K562 (cell line): ENCODE measurements at regions of chr17 and their contacts with region 1.

Region 1: GRCh38 chr17:8118769-8119580 is 661 bp upstream of the ALOXE3 start:
- DNase-seq: peak; percentile 73 to 85 (median 76)
- ATAC-seq: peak; percentile 81
- H3K4me3 ChIP-seq: peak overlapping the region; percentile 65
- H3K27ac ChIP-seq: peak overlapping the region; percentile 63; the same call in 2 of the 3 replicates
- H3K4me1 ChIP-seq: peaks cover 20 to 43% of the 10 kb centered on the region in 2 experiments
- H3K27me3 ChIP-seq: peaks cover 14 to 41% of the 10 kb centered on the region in 2 experiments
- CTCF ChIP-seq: peak; percentile 77 to 89 (median 87)
- EP300 ChIP-seq: peak; percentile 32; the same call in 1 of the 2 replicates
- POLR2A ChIP-seq: no peak
- RAD21 ChIP-seq: peak; percentile 52 to 68

Region 2: GRCh38 chr17:7834962-7835813 is 283.8 kb before region 1 on chr17:
- CTCF ChIA-PET with region 1: no interaction called
- POLR2A ChIA-PET with region 1: no interaction called
- in situ Hi-C with region 1: no loop called
- intact Hi-C with region 1: loop called (anchors 10 kb)
- DNase-seq: peak; percentile 84 to 96 (median 90)
- ATAC-seq: peak; percentile 65
- H3K4me3 ChIP-seq: peak overlapping the region; percentile 65
- H3K27ac ChIP-seq: peak overlapping the region; percentile 85
- H3K4me1 ChIP-seq: peaks cover 34 to 50% of the 10 kb centered on the region in 2 experiments
- H3K27me3 ChIP-seq: peaks cover 8 to 14% of the 10 kb centered on the region in 2 experiments; a peak in 4 of 5 replicates
- CTCF ChIP-seq: peak; percentile 60 to 90 (median 65)
- EP300 ChIP-seq: 0 out of 2 replicates have a peak, but pooled peaks have one; percentile 16
- POLR2A ChIP-seq: 0 out of 2 replicates have a peak, but pooled peaks have one; percentile 1
- RAD21 ChIP-seq: peak; percentile 43 to 77

Region 3: GRCh38 chr17:7956228-7956965 is 162.6 kb before region 1 on chr17:
- CTCF ChIA-PET with region 1: no interaction called
- POLR2A ChIA-PET with region 1: no interaction called
- in situ Hi-C with region 1: no loop called
- intact Hi-C with region 1: no loop called
- DNase-seq: no peak
- ATAC-seq: no peak
- H3K4me3 ChIP-seq: no peak overlapping the region
- H3K27ac ChIP-seq: no peak overlapping the region
- H3K4me1 ChIP-seq: no peaks in the 10 kb centered on the region; a peak in 1 of 5 replicates
- H3K27me3 ChIP-seq: peaks cover 0 to 5% of the 10 kb centered on the region in 2 experiments; a peak in 1 of 5 replicates
- CTCF ChIP-seq: no peak
- EP300 ChIP-seq: no peak
- POLR2A ChIP-seq: no peak
- RAD21 ChIP-seq: no peak

Region 4: DNA sequence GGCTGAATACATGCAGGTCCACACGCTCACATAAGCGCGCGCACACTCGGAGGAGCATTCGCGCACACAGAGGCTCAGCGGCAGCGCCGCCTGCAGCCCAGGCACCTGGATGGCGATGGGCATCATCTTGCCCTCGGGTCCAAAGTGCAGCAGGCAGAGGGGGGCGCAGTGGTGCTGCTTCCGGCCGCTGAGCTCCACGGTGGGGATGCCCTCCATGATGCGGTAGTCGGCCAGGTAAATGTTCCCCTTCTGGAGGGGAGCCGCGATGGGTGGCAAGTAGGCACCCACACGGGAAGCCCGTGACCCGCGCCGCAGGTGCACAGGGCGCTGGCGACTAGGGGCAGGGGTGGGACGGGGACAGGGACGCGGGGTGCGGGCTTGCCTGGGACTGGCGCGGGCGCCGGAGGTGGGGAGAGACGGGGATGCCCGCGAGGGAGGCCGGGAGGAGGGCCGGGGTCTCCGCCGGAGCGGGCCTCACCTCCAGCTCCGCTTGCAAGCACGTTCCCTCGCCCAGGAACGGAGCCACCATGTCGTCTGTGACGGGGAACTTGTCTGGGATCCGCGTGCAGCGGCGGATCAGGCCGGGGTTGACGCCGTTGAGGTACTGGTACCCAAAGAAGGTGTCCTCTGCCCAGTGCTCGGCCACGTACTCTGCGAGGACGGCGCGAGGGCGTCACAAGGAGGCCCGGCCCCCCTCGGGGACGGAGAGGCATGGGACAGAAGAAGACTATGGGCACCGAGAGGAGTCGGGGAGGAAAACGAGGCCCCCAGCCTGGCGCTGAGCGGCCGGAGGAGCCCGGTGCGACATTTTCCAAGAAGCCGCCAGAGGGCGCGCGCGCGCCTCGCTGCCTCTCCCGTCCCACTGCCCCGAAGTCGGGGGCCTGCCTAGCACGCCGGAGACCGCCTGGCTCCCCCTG is 39.4 kb before region 1 on chr17:
- CTCF ChIA-PET with region 1: interaction called, 9 read pairs
- POLR2A ChIA-PET with region 1: no interaction called
- in situ Hi-C with region 1: loop called (anchors 5 kb)
- intact Hi-C with region 1: loop called (anchors 2 kb)
- DNase-seq: peak; percentile 74 to 77 (median 76)
- ATAC-seq: peak; percentile 96
- H3K4me3 ChIP-seq: peak overlapping the region; percentile 12; the same call in 1 of the 2 replicates
- H3K27ac ChIP-seq: no peak overlapping the region
- H3K4me1 ChIP-seq: peaks cover 10 to 22% of the 10 kb centered on the region in 2 experiments; a peak in 4 of 5 replicates
- H3K27me3 ChIP-seq: peaks cover 0 to 8% of the 10 kb centered on the region in 2 experiments; a peak in 3 of 5 replicates
- CTCF ChIP-seq: peak; percentile 70 to 86 (median 74)
- EP300 ChIP-seq: no peak
- POLR2A ChIP-seq: no peak
- RAD21 ChIP-seq: peak; percentile 51 to 83

Region 5: GRCh38 chr17:8089728-8090127 is 29.2 kb before region 1 on chr17:
- CTCF ChIA-PET with region 1: no interaction called
- POLR2A ChIA-PET with region 1: no interaction called
- in situ Hi-C with region 1: no loop called
- intact Hi-C with region 1: no loop called
- DNase-seq: no peak
- ATAC-seq: no peak
- H3K4me3 ChIP-seq: no peak overlapping the region
- H3K27ac ChIP-seq: no peak overlapping the region
- H3K4me1 ChIP-seq: peaks cover 0 to 6% of the 10 kb centered on the region in 2 experiments; a peak in 2 of 5 replicates
- H3K27me3 ChIP-seq: peaks cover 3 to 31% of the 10 kb centered on the region in 2 experiments; a peak in 2 of 5 replicates
- CTCF ChIP-seq: no peak
- EP300 ChIP-seq: no peak
- POLR2A ChIP-seq: no peak
- RAD21 ChIP-seq: no peak

Region 6: GRCh38 chr17:8138672-8139371 is 19.8 kb after region 1 on chr17:
- CTCF ChIA-PET with region 1: interaction called, 3 read pairs
- POLR2A ChIA-PET with region 1: interaction called, 4 read pairs
- in situ Hi-C with region 1: no loop called
- intact Hi-C with region 1: loop called (anchors 2 kb)
- DNase-seq: peak; percentile 73 to 94 (median 77)
- ATAC-seq: peak; percentile 95
- H3K4me3 ChIP-seq: peak overlapping the region; percentile 59
- H3K27ac ChIP-seq: peak overlapping the region; percentile 95
- H3K4me1 ChIP-seq: peaks cover 6 to 28% of the 10 kb centered on the region in 2 experiments; a peak in 4 of 5 replicates
- H3K27me3 ChIP-seq: no peaks in the 10 kb centered on the region
- CTCF ChIP-seq: peak; percentile 84 to 98 (median 96)
- EP300 ChIP-seq: peak; percentile 42; the same call in 1 of the 2 replicates
- POLR2A ChIP-seq: no peak; the same call in 1 of the 2 replicates
- RAD21 ChIP-seq: peak; percentile 75 to 77

Region 7: DNA sequence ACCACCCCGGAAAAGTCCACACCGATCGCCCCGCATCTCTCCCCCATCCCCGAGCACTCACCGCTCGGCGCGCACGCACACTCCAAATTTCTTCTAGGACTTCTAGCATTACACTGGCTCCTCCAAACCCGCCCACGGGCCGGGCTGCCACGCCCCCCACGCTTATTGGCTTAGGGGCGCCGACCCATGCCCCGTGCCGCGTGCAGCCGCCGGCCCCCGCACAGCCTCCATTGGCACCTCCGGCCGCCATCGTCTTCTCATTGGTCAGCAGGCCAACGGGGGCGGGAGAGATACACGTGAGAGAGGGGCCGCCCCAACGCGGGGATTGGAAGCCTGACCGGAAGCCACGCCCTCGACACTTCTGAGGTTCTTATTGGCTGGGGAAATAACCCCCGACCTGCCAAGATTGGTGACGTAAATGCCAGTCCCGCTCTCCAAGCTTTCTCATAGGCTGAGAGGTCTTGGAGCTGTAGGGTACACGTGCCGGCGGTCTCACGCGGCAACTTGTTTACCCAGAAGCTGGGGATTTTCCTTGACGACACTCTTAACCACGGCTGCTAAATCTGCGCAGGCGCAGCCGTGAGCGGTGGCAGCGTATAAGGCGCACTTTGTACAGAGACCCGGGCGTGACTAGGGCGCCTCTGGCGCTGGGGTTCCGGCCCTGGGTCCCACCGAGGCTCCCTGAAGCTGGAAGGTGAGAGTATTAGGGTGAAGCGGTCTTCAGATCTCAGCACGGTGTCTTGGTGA is 37.4 kb after region 1 on chr17:
- CTCF ChIA-PET with region 1: no interaction called
- POLR2A ChIA-PET with region 1: interaction called, 4 read pairs
- in situ Hi-C with region 1: no loop called
- intact Hi-C with region 1: loop called (anchors 1 kb)
- DNase-seq: peak; percentile 88 to 99 (median 92)
- ATAC-seq: peak; percentile 83
- H3K4me3 ChIP-seq: peak overlapping the region; percentile 52
- H3K27ac ChIP-seq: peak overlapping the region; percentile 86
- H3K4me1 ChIP-seq: peaks cover 42 to 68% of the 10 kb centered on the region in 2 experiments
- H3K27me3 ChIP-seq: no peaks in the 10 kb centered on the region
- CTCF ChIP-seq: peak; percentile 30 to 43 (median 43); a peak in 4 of 6 replicates
- EP300 ChIP-seq: peak; percentile 30; the same call in 1 of the 2 replicates
- POLR2A ChIP-seq: peak; percentile 71
- RAD21 ChIP-seq: peak in 1 of 2 experiments; percentile 5; a peak in 1 of 4 replicates

Region 8: GRCh38 chr17:8300627-8301242 is 181.8 kb after region 1 on chr17:
- CTCF ChIA-PET with region 1: interaction called, 3 read pairs
- POLR2A ChIA-PET with region 1: no interaction called
- in situ Hi-C with region 1: loop called (anchors 5 kb)
- intact Hi-C with region 1: loop called (anchors 5 kb)
- DNase-seq: peak; percentile 62 to 73 (median 65)
- ATAC-seq: peak; percentile 93
- H3K4me3 ChIP-seq: no peak overlapping the region
- H3K27ac ChIP-seq: no peak overlapping the region
- H3K4me1 ChIP-seq: peaks cover 4 to 7% of the 10 kb centered on the region in 2 experiments; a peak in 4 of 5 replicates
- H3K27me3 ChIP-seq: no peaks in the 10 kb centered on the region
- CTCF ChIP-seq: peak; percentile 75 to 81 (median 81)
- EP300 ChIP-seq: no peak
- POLR2A ChIP-seq: no peak
- RAD21 ChIP-seq: peak; percentile 59 to 86